Activated CD4-positive, alpha-beta T cell treated with anti-CD3 and anti-CD28 coated beads for 36 hours (primary cell): ENCODE measurements at regions of chr15 and their contacts with region 1.

Region 1: DNA sequence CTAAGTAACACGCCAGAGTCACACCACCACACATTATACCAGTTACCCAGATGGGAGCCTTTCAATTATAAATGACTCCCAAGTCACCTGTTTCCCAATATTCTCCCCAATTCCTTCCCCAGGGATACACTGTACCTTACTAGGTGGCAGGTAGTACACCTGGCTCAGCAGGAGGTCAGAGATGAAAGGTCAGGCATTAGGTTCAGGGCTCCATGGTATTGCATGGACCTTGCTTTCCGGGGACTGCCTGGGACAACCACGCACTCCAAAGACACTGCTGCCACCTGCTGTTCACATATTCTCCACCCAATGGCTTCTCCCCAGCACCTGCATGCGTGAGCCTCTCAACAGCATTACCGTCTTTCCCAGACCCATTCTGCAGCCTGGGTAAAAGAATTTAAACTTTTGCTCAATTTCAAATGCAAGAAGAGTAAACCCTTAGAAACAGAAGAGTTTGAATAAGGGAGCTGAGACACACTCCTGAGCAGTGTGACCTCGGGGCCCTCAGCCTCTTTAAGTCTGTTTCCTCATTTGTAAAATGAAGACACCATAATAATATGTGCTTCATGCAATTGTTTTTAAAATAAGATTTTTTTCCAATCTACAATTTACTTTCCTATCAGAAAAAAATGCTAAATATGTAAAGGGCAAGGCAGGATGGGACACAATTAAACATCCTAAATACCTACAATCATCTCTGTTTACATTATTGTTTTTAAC is 28.0 kb upstream of the LACTB start:
- DNase-seq: peak; percentile 87
- ATAC-seq: peak; percentile 94
- H3K4me3 Mint-ChIP-seq: no peak overlapping the region
- H3K27ac Mint-ChIP-seq: no peak overlapping the region
- H3K4me1 Mint-ChIP-seq: peaks cover 4% of the 10 kb centered on the region
- H3K27me3 Mint-ChIP-seq: no peaks in the 10 kb centered on the region

Region 2: GRCh38 chr15:62782039-62782791 is 311.4 kb before region 1 on chr15:
- CTCF ChIA-PET with region 1: no interaction called
- POLR2A ChIA-PET with region 1: no interaction called
- intact Hi-C with region 1: loop called in 1 of 2 experiments (anchors 1 kb)
- DNase-seq: peak; percentile 17
- ATAC-seq: peak; percentile 39
- H3K4me3 Mint-ChIP-seq: no peak overlapping the region
- H3K27ac Mint-ChIP-seq: no peak overlapping the region
- H3K4me1 Mint-ChIP-seq: no peaks in the 10 kb centered on the region
- H3K27me3 Mint-ChIP-seq: no peaks in the 10 kb centered on the region

Region 3: DNA sequence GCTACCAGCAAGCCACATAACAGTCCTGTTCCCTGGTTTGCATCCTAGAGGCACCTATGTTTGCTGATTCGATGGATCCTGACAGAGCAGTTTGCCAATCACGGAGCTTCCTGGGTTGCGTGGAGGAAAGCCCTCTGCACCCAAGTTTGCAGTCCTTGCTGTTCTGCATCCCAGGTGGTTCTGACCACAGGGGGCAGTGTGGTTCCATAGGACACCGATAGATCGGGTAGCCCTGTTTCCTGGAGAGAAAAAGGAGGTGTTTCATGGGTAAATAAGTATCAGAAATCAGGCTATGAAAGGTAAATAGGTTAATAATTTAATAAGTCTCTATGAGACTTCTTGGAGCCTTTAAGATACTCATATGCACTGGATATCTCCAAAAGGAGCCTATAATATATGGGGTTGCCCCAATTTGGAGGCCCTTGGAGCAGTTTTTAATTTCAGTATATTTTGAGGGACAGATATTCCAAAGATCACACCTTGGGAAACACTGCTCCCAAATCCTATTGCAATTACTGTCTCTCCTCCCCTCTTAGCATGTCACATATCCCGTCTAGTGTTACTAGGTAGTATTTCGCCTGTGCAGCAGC is 245.7 kb before region 1 on chr15:
- CTCF ChIA-PET with region 1: interaction called, 5 read pairs
- POLR2A ChIA-PET with region 1: no interaction called
- intact Hi-C with region 1: loop called (anchors 1 to 10 kb)
- DNase-seq: peak; percentile 73
- ATAC-seq: no peak
- H3K4me3 Mint-ChIP-seq: no peak overlapping the region
- H3K27ac Mint-ChIP-seq: no peak overlapping the region
- H3K4me1 Mint-ChIP-seq: no peaks in the 10 kb centered on the region
- H3K27me3 Mint-ChIP-seq: peaks cover 5% of the 10 kb centered on the region

Region 4: DNA sequence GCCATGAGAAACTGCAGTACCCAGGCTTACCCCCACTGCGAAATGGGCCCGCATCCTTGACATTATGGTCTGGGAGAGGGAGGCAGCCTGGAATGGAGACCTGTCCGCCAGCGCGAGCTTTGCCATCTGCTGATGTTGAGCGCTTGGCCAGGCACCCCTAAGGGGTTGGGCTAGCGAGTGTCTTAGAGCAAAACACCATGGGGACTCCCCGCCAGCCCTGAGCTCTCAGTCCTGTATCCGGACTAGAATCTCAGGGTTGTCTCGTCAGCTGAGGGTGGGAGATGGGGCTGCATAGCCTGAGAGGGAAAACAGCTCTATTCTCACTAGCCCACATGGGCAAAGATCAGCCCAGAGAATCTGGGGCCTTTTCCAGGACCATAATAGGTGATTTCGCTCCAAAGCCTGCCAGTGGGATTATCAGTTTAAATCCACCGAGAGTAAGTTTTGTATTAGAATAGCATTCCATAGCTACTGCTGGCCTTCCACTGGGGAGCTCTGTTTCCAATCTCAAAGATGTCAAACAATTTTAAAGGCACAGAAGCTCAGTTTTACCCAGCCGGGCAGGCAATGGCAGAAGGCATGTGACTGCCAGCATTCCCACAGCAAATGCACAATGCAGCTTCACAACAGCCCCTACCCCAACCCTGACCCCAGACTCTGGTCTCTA is 218.6 kb before region 1 on chr15:
- CTCF ChIA-PET with region 1: no interaction called
- POLR2A ChIA-PET with region 1: no interaction called
- intact Hi-C with region 1: no loop called
- DNase-seq: no peak
- ATAC-seq: no peak
- H3K4me3 Mint-ChIP-seq: no peak overlapping the region
- H3K27ac Mint-ChIP-seq: no peak overlapping the region
- H3K4me1 Mint-ChIP-seq: peaks cover 5% of the 10 kb centered on the region
- H3K27me3 Mint-ChIP-seq: no peaks in the 10 kb centered on the region

Region 5: GRCh38 chr15:62900071-62900802 is 193.4 kb before region 1 on chr15:
- CTCF ChIA-PET with region 1: interaction called, 10 read pairs
- POLR2A ChIA-PET with region 1: no interaction called
- intact Hi-C with region 1: loop called (anchors 1 kb)
- DNase-seq: no peak
- ATAC-seq: no peak
- H3K4me3 Mint-ChIP-seq: no peak overlapping the region
- H3K27ac Mint-ChIP-seq: no peak overlapping the region
- H3K4me1 Mint-ChIP-seq: no peaks in the 10 kb centered on the region
- H3K27me3 Mint-ChIP-seq: peaks cover 8% of the 10 kb centered on the region

Region 6: GRCh38 chr15:63038926-63039673 is 54.5 kb before region 1 on chr15:
- CTCF ChIA-PET with region 1: interaction called, 10 read pairs
- POLR2A ChIA-PET with region 1: no interaction called
- intact Hi-C with region 1: no loop called
- DNase-seq: no peak
- ATAC-seq: no peak
- H3K4me3 Mint-ChIP-seq: no peak overlapping the region
- H3K27ac Mint-ChIP-seq: no peak overlapping the region
- H3K4me1 Mint-ChIP-seq: peaks cover 5% of the 10 kb centered on the region
- H3K27me3 Mint-ChIP-seq: peaks cover 34% of the 10 kb centered on the region